Esophagus muscularis mucosa (tissue), 4 donors: ENCODE measurements at regions of chr11 and their contacts with region 1.

Region 1: DNA sequence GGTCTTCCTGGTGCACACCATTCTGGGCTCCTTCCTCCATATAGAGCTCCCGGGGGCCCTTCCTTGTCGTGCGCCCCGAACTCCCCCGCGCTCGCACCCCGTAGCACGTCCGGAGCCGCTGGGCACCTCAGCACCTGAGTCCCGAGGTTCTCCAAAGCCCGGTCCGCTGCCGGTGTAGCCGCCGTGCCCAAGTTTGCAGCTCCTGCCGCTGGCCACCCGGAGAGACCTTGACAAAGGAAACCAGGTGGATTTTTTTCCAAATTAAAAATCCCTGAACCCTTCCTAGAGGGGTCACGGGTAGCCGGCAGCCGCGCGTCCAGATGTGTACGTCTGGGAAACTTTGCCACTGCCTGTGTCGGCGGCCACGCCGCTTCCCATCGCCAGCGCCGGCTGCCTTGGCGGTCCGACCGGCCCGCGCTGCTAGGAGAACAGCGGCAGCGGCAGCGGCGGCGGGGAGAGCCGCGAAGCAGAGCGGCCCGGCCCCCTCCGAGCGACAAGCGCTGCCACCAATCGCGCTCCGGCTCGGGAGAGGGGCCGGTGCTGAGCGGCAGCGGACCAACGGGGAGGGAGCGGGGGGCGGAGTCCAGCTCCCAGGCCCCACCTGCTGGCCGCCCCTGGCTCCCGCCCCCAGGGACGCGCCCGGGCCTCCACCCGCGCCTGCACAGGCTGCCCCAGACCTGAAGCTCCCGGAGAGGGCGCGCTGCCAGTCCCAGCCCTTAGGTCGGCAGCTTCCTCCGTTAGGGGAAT is at the start of gene GALNT18:
- DNase-seq: peak; percentile 93
- H3K4me3 ChIP-seq: peak within 1 kb of the TSS; percentile 64 to 71 (median 68)
- H3K27ac ChIP-seq: peak within 1 kb of the TSS; percentile 75 to 89 (median 82)
- H3K4me1 ChIP-seq: peaks cover 29 to 67% (median 66%) of the 10 kb centered on the region in 4 donors
- H3K27me3 ChIP-seq: no peaks in the 10 kb centered on the region
- CTCF ChIP-seq: peak; percentile 35 to 56 (median 44)
- EP300 ChIP-seq: no peak
- POLR2A ChIP-seq: no peak
- total RNA-seq, gene GALNT18: 29.1 to 67.0 (median 49.3) TPM

Region 2: DNA sequence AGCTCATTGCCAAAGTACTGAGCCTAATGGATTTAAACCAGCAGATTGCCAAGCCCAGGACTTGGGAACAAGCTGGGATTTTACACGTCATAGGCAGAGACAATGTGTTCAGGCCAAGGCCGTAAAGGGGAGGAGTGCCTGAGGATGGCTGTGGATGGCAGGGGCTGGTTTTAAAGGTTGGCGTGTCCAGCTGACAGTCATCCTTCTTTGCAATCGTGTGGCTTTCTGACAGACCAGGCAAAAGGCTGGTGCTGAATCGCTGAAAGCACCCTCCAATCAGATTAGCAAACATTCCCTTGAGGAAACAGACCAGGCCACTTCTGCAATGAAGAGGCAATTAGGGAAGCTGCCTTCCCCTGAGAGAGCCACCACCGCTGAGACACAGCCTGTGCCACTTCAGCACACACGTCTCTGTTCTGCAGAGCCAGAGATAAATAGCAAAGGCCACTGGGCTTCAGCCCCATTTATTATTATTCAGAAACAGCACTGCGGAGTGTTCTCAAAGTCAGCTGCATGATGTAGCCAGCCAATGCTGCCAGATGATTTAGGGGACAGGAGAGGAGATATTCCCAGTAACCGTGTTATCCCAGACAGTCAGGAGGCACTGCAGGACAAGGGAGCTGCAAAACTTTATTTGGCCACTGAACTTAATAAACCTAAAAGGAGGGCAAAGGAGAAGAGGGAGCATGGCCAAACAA is 214.5 kb before region 1 on chr11:
- intact Hi-C with region 1: loop called (anchors 5 kb)
- DNase-seq: no peak
- H3K4me3 ChIP-seq: no peak overlapping the region
- H3K27ac ChIP-seq: peak overlapping the region; percentile 42 to 77 (median 73)
- H3K4me1 ChIP-seq: peaks cover 52 to 79% (median 70%) of the 10 kb centered on the region in 4 donors
- H3K27me3 ChIP-seq: no peaks in the 10 kb centered on the region
- CTCF ChIP-seq: peak in 2 of 3 experiments; percentile 26 to 30
- EP300 ChIP-seq: peak; percentile 62
- POLR2A ChIP-seq: no peak

Region 3: DNA sequence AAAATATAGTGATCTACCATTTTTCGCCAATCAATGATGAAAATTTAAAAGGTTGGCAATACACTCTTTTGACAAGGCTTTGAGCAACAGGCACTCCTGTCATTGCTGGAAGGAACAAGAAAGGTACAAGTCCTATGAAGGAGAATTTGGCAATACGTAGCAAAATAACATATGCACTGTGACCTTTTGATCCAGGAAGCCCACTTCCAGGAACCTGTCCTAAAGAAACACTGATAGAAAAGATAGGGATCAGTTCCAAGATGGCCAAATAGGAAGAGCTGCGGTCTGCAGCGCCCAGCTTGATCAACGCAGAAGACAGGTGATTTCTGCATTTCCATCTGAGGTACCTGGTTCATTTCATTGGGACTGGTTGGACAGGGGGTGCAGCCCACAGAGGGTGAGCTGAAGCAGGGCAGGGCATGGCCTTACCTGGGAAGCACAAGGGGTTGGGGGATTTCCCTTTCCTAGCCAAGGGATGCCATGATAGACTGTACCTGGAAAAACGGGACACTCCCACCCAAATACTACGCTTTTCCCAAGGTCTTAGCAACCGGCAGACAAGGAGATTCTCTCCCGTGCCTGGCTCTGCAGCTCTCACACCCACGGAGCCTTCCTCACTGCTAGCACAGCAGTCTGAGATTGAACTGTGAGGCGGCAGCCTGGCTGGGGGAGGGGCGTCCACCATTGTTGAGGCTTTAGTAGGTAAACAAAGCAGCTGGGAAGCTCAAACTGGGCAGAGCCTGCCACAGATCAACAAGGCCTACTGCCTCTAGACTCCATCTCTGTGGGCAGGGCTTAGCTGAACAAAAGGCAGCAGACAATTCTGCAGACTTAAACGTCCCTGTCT is 69.8 kb after region 1 on chr11:
- intact Hi-C with region 1: no loop called
- DNase-seq: no peak
- H3K4me3 ChIP-seq: no peak overlapping the region
- H3K27ac ChIP-seq: no peak overlapping the region
- H3K4me1 ChIP-seq: no peaks in the 10 kb centered on the region
- H3K27me3 ChIP-seq: no peaks in the 10 kb centered on the region
- CTCF ChIP-seq: no peak
- EP300 ChIP-seq: no peak
- POLR2A ChIP-seq: no peak

Region 4: DNA sequence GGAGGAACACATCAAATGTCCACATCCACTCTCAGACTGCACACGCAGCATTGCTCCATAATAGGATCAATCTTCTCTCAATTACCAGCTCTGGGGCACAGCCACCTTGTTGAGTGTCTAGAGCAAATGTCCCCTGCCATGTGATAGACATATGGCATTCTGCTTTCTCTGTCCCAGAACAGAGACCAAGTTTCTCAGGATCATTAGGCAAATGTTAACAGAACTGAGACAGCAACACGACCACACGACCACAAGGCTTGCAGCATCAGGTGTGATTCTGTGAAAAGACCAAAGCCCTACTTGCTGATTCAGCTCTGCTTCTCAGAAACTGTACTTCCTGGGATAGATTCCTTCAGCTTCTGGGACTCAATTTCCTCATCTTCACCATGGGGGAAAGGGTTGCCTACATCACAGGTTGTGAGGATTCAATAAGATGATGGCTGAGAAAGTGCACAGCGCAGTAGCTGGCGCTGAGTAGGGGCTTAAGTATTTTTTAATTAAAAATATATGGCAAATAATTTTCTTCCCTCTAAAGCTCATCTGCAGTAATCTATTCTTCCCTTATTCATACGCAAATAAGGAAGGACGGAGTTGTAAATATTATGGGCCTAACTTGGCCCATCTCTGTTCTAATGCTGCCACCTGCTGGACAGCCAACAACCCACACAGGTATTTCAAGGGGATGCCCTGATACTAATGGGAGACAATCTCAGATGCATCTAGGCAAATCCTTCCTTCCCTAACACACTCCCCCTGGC is 165.7 kb after region 1 on chr11:
- intact Hi-C with region 1: loop called (anchors 5 kb)
- DNase-seq: peak; percentile 57
- H3K4me3 ChIP-seq: no peak overlapping the region
- H3K27ac ChIP-seq: no peak overlapping the region
- H3K4me1 ChIP-seq: peaks cover 0 to 17% (median 3%) of the 10 kb centered on the region in 4 donors
- H3K27me3 ChIP-seq: no peaks in the 10 kb centered on the region
- CTCF ChIP-seq: peak; percentile 85 to 95 (median 94)
- EP300 ChIP-seq: no peak
- POLR2A ChIP-seq: no peak

Region 5: GRCh38 chr11:11876458-11876857 is 254.7 kb after region 1 on chr11:
- intact Hi-C with region 1: no loop called
- DNase-seq: no peak
- H3K4me3 ChIP-seq: no peak overlapping the region
- H3K27ac ChIP-seq: no peak overlapping the region
- H3K4me1 ChIP-seq: peaks cover 30 to 58% (median 35%) of the 10 kb centered on the region in 4 donors
- H3K27me3 ChIP-seq: no peaks in the 10 kb centered on the region
- CTCF ChIP-seq: no peak
- EP300 ChIP-seq: no peak
- POLR2A ChIP-seq: no peak